CD4-positive, alpha-beta T cell (primary cell): ENCODE measurements at regions of chr5 and their contacts with region 1.

Region 1: DNA sequence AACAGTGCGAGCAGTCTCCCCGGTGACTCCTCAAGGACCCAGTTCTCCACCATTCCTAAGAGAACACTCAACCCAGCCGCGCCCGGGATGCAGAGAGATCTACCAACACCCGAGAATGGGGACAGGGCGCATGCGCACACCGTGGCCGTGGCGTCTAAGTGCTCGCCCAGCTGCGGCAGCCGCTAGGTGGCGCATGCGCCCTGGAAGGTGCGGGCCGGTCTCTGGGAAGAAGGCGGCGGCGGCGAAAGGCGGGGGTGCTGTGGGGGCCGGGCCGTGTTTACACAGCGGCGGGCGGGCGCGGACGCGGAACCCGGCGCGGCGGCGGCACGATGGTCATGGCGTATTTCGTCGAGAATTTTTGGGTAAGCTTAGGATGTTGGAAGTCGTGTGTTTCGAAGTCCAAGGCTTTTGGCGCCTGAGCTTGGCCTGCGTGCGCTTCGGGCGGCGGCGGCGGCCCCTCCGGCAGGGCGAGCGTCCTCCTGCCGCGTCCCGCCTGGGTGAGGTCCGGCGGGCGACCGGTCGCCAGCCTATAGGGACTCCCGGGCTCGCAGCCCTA is at the start of gene FCHO2:
- DNase-seq: peak; percentile 90 to 99 (median 96)
- ATAC-seq: peak; percentile 95
- H3K4me3 ChIP-seq: peak within 1 kb of the TSS; percentile 92
- H3K4me3 Mint-ChIP-seq: peak within 1 kb of the TSS; percentile 98
- H3K27ac ChIP-seq: no peak within 1 kb of the TSS
- H3K27ac Mint-ChIP-seq: peak within 1 kb of the TSS; percentile 73
- H3K4me1 ChIP-seq: peaks cover 11% of the 10 kb centered on the region
- H3K4me1 Mint-ChIP-seq: peaks cover 18% of the 10 kb centered on the region
- H3K27me3 ChIP-seq: peaks cover 2 to 33% of the 10 kb centered on the region in 2 experiments
- H3K27me3 Mint-ChIP-seq: peaks cover 67% of the 10 kb centered on the region
- CTCF ChIP-seq: peak; percentile 77
- total RNA-seq, gene FCHO2: 2.0 to 2.6 TPM

Region 2: DNA sequence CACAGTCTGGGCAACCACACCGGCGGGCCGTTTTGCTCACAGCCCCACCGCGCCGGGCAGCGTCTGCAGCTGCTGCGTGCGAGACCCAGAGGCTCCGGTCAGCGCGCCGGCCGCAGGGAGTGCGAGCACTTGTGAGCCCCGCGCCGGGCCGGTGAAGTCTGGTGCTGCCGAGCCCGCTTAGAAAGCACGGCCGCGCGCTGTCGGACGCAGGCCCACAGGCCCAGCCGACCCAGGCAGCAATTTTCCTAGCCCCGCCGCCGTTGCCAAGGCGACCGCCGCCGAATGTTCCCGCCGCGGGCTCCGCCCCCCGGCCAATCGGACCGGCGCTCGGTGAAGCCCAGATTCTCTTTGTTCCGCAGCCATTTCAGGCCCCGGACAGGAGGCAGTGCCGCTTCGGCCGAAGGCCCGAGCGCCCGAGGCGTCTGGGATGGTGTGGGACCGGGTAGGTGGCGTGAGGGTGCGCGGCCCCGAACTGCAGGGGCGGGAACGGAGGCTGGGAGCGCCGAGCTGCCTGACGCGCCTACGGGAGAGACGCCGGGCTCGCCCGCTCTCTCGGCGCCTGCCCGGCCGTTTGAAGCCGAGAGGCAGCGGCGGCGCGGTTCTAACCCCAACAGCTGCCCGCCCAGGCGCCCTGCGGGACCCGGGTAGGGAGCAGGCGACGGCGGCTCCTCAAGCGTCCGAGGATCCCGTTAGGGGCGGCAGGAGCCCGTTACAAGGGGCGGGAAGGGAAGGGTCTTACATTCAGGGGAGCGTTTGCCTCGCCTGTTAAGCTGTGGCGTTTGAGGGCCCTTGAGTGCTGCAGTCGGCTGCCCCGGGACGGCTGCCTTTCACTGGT is 139.3 kb before region 1 on chr5 and contains the start of gene TNPO1:
- CTCF ChIA-PET with region 1: interaction called, 4 read pairs
- POLR2A ChIA-PET with region 1: interaction called, 6 read pairs
- intact Hi-C with region 1: loop called in 1 of 2 experiments (anchors 5 kb)
- DNase-seq: peak; percentile 70 to 93 (median 79)
- ATAC-seq: peak; percentile 71
- H3K4me3 ChIP-seq: peak within 1 kb of the TSS; percentile 87
- H3K4me3 Mint-ChIP-seq: peak within 1 kb of the TSS; percentile 89
- H3K27ac ChIP-seq: peak within 1 kb of the TSS; percentile 79 to 87
- H3K27ac Mint-ChIP-seq: peak within 1 kb of the TSS; percentile 86
- H3K4me1 ChIP-seq: peaks cover 15% of the 10 kb centered on the region
- H3K4me1 Mint-ChIP-seq: peaks cover 30% of the 10 kb centered on the region
- H3K27me3 ChIP-seq: peaks cover 3 to 4% of the 10 kb centered on the region in 2 experiments
- H3K27me3 Mint-ChIP-seq: peaks cover 22% of the 10 kb centered on the region
- CTCF ChIP-seq: no peak
- total RNA-seq, gene TNPO1: 69.6 to 74.7 TPM

Region 3: DNA sequence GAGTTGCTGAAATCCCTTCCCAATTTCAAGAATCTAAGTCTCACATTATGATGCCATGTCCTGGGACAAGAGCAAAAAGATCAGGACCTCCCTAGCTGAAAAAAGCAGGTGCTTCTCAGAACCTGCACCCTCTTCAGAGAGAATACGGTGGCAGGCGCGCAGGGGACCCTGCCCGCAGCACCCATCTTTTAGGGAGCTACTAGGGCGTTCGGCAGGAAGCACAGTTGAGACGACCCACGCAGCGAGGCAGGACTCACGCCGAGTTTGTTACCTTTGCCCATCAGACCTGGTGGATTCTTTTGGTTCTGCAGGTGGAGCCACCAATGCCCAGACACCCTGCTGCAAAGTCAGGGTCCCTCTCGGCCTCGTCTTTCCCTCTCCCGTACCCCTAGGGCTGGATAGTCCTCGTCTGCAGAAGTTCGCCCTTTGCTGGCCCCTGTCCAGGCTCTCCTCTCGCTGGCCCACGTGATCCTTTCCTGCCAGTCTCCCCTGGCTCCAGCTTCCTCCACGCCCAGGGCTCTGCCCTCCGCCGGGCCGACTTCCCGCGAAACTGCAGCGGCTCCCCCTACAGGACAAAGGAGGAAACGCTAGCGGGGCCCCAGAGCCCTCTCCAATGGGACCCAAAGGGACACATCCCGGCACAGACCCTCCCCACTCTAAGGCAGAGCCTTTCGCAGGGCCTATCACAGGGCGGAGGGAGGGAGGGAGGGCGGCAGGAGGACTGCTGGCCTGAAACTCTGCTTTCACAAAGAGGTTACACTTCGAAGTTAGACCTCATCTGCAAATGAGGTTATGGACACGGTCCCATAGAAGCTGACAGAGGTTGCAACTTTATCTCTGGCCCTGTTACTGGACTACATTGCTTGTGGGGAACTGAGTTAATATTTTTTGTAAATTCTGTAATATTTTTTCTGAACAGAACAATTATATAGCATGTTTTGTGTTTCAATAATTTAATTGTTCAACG is 246.0 kb after region 1 on chr5:
- CTCF ChIA-PET with region 1: no interaction called
- POLR2A ChIA-PET with region 1: interaction called, 3 read pairs
- intact Hi-C with region 1: loop called (anchors 5 kb)
- DNase-seq: peak; percentile 47 to 77 (median 61)
- ATAC-seq: peak; percentile 94
- H3K4me3 ChIP-seq: no peak overlapping the region
- H3K4me3 Mint-ChIP-seq: no peak overlapping the region
- H3K27ac ChIP-seq: no peak overlapping the region
- H3K27ac Mint-ChIP-seq: no peak overlapping the region
- H3K4me1 ChIP-seq: peaks cover 7% of the 10 kb centered on the region
- H3K4me1 Mint-ChIP-seq: no peaks in the 10 kb centered on the region
- H3K27me3 ChIP-seq: peaks cover 42 to 44% of the 10 kb centered on the region in 2 experiments
- H3K27me3 Mint-ChIP-seq: peaks cover 84% of the 10 kb centered on the region
- CTCF ChIP-seq: peak; percentile 84

Region 4: DNA sequence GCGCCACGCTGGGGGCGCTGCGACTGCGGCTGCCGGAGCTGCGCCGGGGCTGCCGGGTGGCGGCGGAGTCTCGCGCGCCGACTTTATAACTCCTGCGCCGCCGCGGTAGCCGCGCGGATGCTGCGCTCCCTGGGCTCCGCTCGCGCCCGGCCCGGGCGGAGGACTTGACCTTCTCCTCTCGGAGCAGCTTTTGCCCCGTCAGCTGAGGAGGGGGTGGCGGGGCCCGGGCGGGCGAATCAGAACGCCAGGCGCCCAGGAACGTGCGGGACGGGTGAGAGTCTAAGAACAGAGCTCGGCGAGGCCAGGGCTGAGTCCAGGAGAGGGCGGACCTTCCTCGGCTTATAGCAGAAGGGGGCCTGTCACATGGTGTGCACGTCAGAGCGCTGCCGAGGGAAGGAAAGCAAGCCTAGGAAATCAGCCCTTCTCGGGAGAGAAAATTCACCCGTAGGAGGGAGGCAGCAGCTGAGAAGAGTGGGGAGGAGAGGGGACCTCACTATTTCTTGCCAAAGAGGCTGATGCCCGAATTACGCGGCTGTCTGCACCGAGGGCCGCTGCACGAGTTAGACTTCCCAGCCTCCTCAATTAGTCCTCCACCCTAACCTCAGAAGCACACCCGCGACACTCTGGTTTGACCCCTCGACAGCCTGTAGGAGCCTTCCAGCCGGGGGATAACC is 492.8 kb after region 1 on chr5 and contains the start of gene FOXD1:
- CTCF ChIA-PET with region 1: interaction called, 3 read pairs
- POLR2A ChIA-PET with region 1: no interaction called
- intact Hi-C with region 1: loop called (anchors 2 to 5 kb)
- DNase-seq: peak in 6 of 14 experiments; percentile 26 to 63 (median 46)
- ATAC-seq: peak; percentile 29
- H3K4me3 ChIP-seq: peak within 1 kb of the TSS; percentile 54
- H3K4me3 Mint-ChIP-seq: peak within 1 kb of the TSS; percentile 88
- H3K27ac ChIP-seq: no peak within 1 kb of the TSS
- H3K27ac Mint-ChIP-seq: peak within 1 kb of the TSS; percentile 68
- H3K4me1 ChIP-seq: peaks cover 41% of the 10 kb centered on the region
- H3K4me1 Mint-ChIP-seq: peaks cover 20% of the 10 kb centered on the region
- H3K27me3 ChIP-seq: peaks cover 65 to 84% of the 10 kb centered on the region in 2 experiments
- H3K27me3 Mint-ChIP-seq: peaks cover 87% of the 10 kb centered on the region
- CTCF ChIP-seq: no peak
- total RNA-seq, gene FOXD1: not detected